ENCODE measurements at regions of chr15 and their contacts with region 1.

Region 1: GRCh38 chr15:34342737-34343575 is at the starts of genes NOP10 and NUTM1:
- DNase-seq: peak; percentile 86
- H3K4me3 ChIP-seq: peak within 1 kb of the TSS; percentile 99
- H3K27ac ChIP-seq: peak within 1 kb of the TSS; percentile 87
- H3K27me3 ChIP-seq: no peaks in the 10 kb centered on the region
- CTCF ChIP-seq: peak; percentile 93
- polyA plus RNA-seq, gene NOP10: 262 and 363 TPM in 2 replicates
- polyA plus RNA-seq, gene NUTM1: not detected in 2 replicates

Region 2: GRCh38 chr15:34327906-34328305 is 15.1 kb before region 1 on chr15:
- CTCF ChIA-PET with region 1: interaction called, 18 read pairs
- POLR2A ChIA-PET with region 1: no interaction called
- DNase-seq: no peak
- H3K4me3 ChIP-seq: no peak overlapping the region
- H3K27ac ChIP-seq: no peak overlapping the region
- H3K27me3 ChIP-seq: no peaks in the 10 kb centered on the region
- CTCF ChIP-seq: no peak

Region 3: DNA sequence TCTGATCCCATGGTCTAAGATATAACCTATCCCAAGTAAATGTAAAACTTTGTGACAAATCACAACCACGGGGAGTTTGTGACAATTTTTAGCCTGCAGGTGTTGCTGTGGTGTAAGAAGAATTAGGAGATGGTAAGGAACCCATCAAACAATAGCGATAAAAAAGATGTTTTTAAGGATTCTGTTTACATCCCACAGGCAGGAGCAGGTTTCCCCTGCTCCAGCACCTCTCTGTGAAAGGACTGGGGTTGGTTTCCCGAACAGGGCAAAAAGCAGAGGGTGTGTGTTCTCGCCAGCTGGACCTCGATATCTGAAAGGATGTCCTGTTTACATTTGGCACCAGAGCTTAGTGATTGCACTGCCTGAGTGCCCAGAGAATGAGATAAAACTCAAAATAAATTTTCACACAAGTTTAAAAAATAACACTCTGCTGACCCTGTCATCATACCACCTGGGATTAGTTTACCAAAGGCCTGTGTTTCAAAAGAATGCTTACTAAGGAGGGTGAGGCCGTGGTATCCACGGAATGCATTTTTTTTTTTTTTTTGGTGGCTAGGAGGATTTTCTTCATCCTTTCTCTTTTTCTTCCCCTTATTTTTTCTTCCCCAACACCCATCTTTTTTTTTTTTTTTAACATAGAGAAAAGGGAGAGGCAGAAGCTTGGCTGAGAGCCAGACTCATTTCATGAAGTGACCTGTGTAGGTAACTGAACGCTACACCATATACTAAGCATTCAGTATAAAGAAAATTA is 1354.8 kb after region 1 on chr15:
- CTCF ChIA-PET with region 1: no interaction called
- POLR2A ChIA-PET with region 1: no interaction called
- DNase-seq: peak; percentile 62
- H3K4me3 ChIP-seq: no peak overlapping the region
- H3K27ac ChIP-seq: peak overlapping the region; percentile 87
- H3K27me3 ChIP-seq: no peaks in the 10 kb centered on the region
- CTCF ChIP-seq: no peak